Endothelial cell of umbilical vein (primary cell): ENCODE measurements at regions of chr3 and their contacts with region 1.

Region 1: DNA sequence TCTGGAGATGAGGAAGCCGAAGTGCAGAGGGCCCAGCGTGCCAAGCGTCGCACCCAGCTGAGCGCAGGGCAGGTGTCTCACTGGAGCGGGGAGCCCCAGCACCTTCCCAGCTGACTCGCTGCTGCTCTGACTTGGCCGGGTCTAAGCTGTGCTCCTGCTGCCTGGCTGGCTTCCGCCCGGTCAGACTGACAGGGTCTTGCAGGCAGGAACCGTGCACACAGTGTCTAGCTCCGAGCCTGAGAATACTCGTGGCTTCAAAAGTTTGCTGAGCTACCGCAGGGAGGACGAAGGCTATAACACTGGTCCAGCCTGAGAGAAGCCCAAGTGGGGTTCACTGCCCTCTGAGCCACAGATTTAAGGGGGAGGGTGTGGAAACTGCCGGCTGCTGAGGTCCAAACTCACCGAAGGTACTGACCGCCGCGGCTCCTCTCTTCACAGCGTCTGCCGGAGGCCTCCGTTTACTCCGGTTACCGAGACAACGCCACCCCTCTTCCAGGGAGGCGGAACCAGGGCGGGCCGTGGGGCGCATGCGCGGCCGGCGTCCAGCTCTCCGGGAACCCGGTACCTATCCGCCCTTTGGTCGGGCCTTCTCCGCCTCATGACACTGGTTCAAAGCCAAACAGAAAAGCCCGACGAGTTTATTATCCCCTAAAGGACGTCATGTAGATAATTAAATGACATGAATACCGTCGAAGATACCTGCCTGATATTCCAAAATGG is at the start of gene CFAP44:
- DNase-seq: peak; percentile 61
- H3K4me3 ChIP-seq: peak within 1 kb of the TSS; percentile 20 to 57 (median 27)
- H3K27ac ChIP-seq: no peak within 1 kb of the TSS
- H3K4me1 ChIP-seq: peaks cover 7% of the 10 kb centered on the region
- H3K27me3 ChIP-seq: no peaks in the 10 kb centered on the region
- CTCF ChIP-seq: no peak
- POLR2A ChIP-seq: no peak
- total RNA-seq, gene CFAP44: 3.3 and 4.7 TPM in 2 replicates

Region 2: DNA sequence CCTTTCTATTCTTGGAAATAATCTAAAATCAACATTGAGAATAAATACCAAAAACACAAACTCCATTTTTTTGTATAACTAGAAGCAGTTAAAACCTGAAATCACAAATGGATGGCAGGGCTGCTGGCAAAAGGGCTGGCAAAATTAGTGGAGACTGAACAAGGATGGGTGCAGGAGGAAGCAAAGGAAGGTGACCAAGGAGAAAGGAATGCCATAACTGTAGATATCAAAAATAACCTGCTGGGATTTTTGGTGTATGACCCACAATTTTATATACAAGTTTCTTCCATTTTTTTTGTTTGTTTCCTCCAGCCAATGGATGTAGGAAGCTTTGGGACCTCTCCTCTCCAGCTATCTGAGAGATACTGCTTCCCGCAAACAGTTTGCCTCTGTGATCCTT is 12.6 kb before region 1 on chr3:
- CTCF ChIA-PET with region 1: interaction called, 5 read pairs
- POLR2A ChIA-PET with region 1: no interaction called
- dilution Hi-C with region 1: no loop called
- intact Hi-C with region 1: loop called (anchors 1 kb)
- DNase-seq: peak; percentile 15
- H3K4me3 ChIP-seq: no peak overlapping the region
- H3K27ac ChIP-seq: no peak overlapping the region
- H3K4me1 ChIP-seq: peaks cover 11% of the 10 kb centered on the region
- H3K27me3 ChIP-seq: no peaks in the 10 kb centered on the region
- CTCF ChIP-seq: no peak
- POLR2A ChIP-seq: no peak

Region 3: GRCh38 chr3:113712129-113712528 is 270.9 kb after region 1 on chr3:
- CTCF ChIA-PET with region 1: no interaction called
- POLR2A ChIA-PET with region 1: no interaction called
- dilution Hi-C with region 1: no loop called
- intact Hi-C with region 1: no loop called
- DNase-seq: peak; percentile 12
- H3K4me3 ChIP-seq: no peak overlapping the region
- H3K27ac ChIP-seq: no peak overlapping the region
- H3K4me1 ChIP-seq: no peaks in the 10 kb centered on the region
- H3K27me3 ChIP-seq: peaks cover 0 to 4% of the 10 kb centered on the region in 2 experiments
- CTCF ChIP-seq: no peak
- POLR2A ChIP-seq: no peak